ENCODE measurements at regions of chr5 and their contacts with region 1.

Region 1: GRCh38 chr5:19018822-19019221 is 969.2 kb downstream of the CDH18 start:
- DNase-seq: no peak
- ATAC-seq: no peak
- H3K4me3 ChIP-seq: no peak overlapping the region
- H3K27ac ChIP-seq: no peak overlapping the region
- H3K4me1 ChIP-seq: no peaks in the 10 kb centered on the region
- H3K27me3 ChIP-seq: no peaks in the 10 kb centered on the region
- CTCF ChIP-seq: no peak

Region 2: GRCh38 chr5:18959535-18959934 is 59.3 kb before region 1 on chr5:
- intact Hi-C with region 1: no loop called
- DNase-seq: no peak
- ATAC-seq: no peak
- H3K4me3 ChIP-seq: no peak overlapping the region
- H3K27ac ChIP-seq: no peak overlapping the region
- H3K4me1 ChIP-seq: no peaks in the 10 kb centered on the region
- H3K27me3 ChIP-seq: no peaks in the 10 kb centered on the region
- CTCF ChIP-seq: no peak

Region 3: DNA sequence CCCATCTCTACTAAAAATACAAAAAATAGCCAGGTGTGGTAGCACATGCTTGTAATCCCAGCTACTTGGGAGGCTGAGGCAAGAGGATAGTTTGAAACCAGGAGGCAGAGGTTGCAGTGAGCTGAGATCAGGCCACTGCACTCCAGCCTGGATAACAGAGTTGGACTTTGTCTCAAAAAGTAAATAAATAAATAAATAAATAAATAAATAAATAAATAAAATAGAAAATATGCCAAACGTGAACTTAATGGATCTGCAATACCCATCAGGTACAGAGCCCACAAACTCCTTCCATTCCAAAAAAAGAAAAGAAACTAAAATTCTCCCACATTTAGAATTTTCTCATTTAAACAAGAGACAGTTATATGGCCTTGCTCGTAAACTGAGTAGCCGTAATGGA is 266.5 kb after region 1 on chr5:
- intact Hi-C with region 1: loop called in 1 of 3 experiments (anchors 5 kb)
- DNase-seq: no peak
- ATAC-seq: no peak
- H3K4me3 ChIP-seq: no peak overlapping the region
- H3K27ac ChIP-seq: no peak overlapping the region
- H3K4me1 ChIP-seq: no peaks in the 10 kb centered on the region
- H3K27me3 ChIP-seq: no peaks in the 10 kb centered on the region
- CTCF ChIP-seq: no peak

Region 4: GRCh38 chr5:19401032-19401431 is 382.2 kb after region 1 on chr5:
- intact Hi-C with region 1: no loop called
- DNase-seq: no peak
- ATAC-seq: no peak
- H3K4me3 ChIP-seq: no peak overlapping the region
- H3K27ac ChIP-seq: no peak overlapping the region
- H3K4me1 ChIP-seq: no peaks in the 10 kb centered on the region
- H3K27me3 ChIP-seq: no peaks in the 10 kb centered on the region
- CTCF ChIP-seq: no peak

Region 5: DNA sequence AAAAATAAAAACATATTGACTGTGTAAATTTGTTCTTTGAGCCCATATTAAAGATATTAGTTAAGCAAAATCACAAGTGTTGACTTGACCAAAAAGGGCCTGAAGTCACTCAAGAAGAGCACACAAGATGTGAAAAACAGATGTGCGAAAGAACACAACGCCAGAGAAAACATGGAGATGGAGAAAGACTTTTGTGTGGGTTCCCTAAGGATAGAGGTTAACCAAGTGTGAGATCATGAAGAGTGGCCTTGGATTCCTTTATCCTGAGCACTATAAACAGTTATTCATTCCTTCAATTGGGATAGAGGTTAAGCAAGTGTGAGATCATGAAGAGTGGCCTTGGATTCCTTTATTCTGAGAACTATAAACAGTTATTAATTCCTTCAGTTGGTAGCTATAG is 607.4 kb after region 1 on chr5:
- intact Hi-C with region 1: no loop called
- DNase-seq: no peak
- ATAC-seq: no peak
- H3K4me3 ChIP-seq: no peak overlapping the region
- H3K27ac ChIP-seq: no peak overlapping the region
- H3K4me1 ChIP-seq: no peaks in the 10 kb centered on the region
- H3K27me3 ChIP-seq: no peaks in the 10 kb centered on the region
- CTCF ChIP-seq: no peak